ENCODE measurements at regions of chr14 and their contacts with region 1.

Region 1: GRCh38 chr14:67934008-67934481 is 114.5 kb downstream of the RAD51B start:
- DNase-seq: peak in 1 of 2 donors; percentile 90
- H3K4me3 ChIP-seq: no peak overlapping the region
- H3K27ac ChIP-seq: peak overlapping the region in 3 of 5 donors; percentile 17 to 59 (median 53)
- H3K4me1 ChIP-seq: peaks cover 4 to 21% (median 13%) of the 10 kb centered on the region in 4 donors
- H3K27me3 ChIP-seq: no peaks in the 10 kb centered on the region
- CTCF ChIP-seq: peak in 6 of 7 experiments; percentile 20 to 84 (median 57)
- EP300 ChIP-seq: no peak
- POLR2A ChIP-seq: no peak

Region 2: DNA sequence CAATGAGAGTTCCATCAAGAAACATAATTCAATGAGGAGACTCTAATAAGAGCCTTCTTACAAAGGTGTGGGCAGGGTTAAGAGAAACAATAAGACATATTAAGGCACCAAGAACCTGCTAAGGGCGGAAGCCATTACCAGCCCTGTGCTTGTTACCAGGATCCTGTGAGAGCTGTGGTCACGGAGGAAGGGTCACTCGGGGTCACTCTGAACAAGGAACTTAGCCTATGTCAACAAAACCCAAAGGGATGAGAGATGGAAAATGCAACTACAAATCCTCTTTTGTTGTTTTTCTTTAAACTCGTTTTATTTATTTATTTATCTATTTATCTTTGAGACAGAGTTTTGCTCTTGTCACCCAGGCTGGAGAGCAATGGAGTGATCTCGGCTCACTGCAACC is 1908.3 kb before region 1 on chr14:
- intact Hi-C with region 1: no loop called
- DNase-seq: no peak
- H3K4me3 ChIP-seq: no peak overlapping the region
- H3K27ac ChIP-seq: no peak overlapping the region
- H3K4me1 ChIP-seq: no peaks in the 10 kb centered on the region
- H3K27me3 ChIP-seq: no peaks in the 10 kb centered on the region
- CTCF ChIP-seq: no peak
- EP300 ChIP-seq: no peak
- POLR2A ChIP-seq: no peak

Region 3: DNA sequence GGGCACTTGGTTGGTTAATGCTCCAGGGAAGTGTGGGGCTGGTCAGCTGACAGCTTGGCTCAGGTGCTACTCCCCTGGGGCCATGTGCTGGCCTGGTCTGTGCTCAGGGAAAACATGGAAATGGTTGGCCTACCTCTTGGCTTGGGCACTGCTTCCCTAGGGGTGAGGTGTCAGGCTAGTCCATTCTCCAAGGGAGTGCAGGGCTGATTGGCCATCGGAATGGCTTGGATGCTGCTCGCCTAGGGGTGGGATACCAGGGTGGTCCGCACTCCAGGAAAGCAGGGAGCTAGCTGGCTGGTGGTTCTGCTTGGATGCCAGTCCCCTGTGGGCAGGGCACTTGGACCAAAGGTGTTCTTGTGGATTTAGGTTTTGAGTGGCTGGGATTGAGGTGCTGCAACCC is 131.3 kb after region 1 on chr14:
- intact Hi-C with region 1: no loop called
- DNase-seq: no peak
- H3K4me3 ChIP-seq: no peak overlapping the region
- H3K27ac ChIP-seq: no peak overlapping the region
- H3K4me1 ChIP-seq: peaks cover 0 to 5% (median 1%) of the 10 kb centered on the region in 4 donors
- H3K27me3 ChIP-seq: no peaks in the 10 kb centered on the region
- CTCF ChIP-seq: no peak
- EP300 ChIP-seq: no peak
- POLR2A ChIP-seq: no peak

Region 4: DNA sequence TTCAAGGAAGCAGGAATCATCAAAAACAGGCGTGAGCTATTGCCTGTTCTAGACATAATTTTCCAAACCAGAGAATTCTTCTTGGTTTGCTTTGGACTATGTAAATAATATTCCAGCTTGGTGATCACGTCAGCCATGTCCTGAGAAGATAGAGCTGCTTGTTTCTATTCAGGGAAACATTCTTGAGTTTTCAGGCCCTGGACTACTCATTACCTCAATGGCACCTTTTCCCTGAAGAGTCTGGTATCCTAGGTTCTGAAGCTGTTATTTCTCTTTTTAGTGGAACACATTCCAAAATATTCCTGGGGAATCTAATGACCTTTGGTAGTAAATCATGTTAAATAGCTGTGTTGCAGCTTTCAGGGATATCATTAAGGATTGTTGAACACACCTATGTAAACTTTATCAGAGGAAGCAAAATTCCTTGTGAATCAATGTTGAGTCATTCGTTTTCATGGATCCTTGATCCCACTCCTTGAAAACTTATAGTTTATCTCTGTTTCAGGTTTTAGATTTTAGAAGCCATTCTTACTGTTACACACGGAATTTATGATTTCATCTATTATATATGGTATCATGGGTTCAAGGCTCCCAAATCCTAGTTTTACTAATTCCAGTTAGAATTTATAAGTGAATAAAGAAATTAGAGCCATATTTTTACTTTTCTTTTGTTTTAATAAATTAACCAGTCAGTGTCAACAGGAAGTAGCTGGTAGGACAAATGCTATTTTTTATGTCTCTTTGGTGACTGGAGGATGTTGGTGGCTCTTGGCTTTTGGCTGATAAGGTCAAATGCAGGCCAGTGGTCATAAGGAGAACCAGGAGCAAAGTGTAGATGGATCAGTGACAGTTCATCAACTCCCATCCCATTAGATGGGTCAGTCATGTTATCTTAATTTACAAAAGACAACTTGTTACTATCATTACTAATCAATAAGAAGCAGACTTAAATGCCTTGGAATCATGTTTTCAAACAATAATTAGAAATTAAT is 478.8 kb after region 1 on chr14:
- intact Hi-C with region 1: no loop called
- DNase-seq: no peak
- H3K4me3 ChIP-seq: no peak overlapping the region
- H3K27ac ChIP-seq: peak overlapping the region in 1 of 5 donors; percentile 23
- H3K4me1 ChIP-seq: peaks cover 0 to 68% (median 21%) of the 10 kb centered on the region in 4 donors
- H3K27me3 ChIP-seq: no peaks in the 10 kb centered on the region
- CTCF ChIP-seq: no peak
- EP300 ChIP-seq: no peak
- POLR2A ChIP-seq: no peak

Region 5: GRCh38 chr14:68824517-68825347 is 890.7 kb after region 1 on chr14:
- intact Hi-C with region 1: loop called (anchors 10 kb)
- DNase-seq: peak; percentile 87 to 91
- H3K4me3 ChIP-seq: no peak overlapping the region
- H3K27ac ChIP-seq: no peak overlapping the region
- H3K4me1 ChIP-seq: peaks cover 5 to 29% (median 14%) of the 10 kb centered on the region in 4 donors
- H3K27me3 ChIP-seq: no peaks in the 10 kb centered on the region
- CTCF ChIP-seq: peak in 5 of 7 experiments; percentile 35 to 88 (median 75)
- EP300 ChIP-seq: no peak
- POLR2A ChIP-seq: no peak

Measured in stomach (tissue), 19 donors.